GM10248 (cell line): ENCODE measurements at regions of chr13 and their contacts with region 1.

Region 1: GRCh38 chr13:27977476-27978300 is 8.6 kb upstream of the CDX2 start:
- DNase-seq: no peak
- CTCF ChIP-seq: no peak

Region 2: GRCh38 chr13:27374650-27375049 is 603.0 kb before region 1 on chr13:
- CTCF ChIA-PET with region 1: interaction called, 20 read pairs
- POLR2A ChIA-PET with region 1: no interaction called
- DNase-seq: peak; percentile 75
- CTCF ChIP-seq: peak; percentile 71

Region 3: DNA sequence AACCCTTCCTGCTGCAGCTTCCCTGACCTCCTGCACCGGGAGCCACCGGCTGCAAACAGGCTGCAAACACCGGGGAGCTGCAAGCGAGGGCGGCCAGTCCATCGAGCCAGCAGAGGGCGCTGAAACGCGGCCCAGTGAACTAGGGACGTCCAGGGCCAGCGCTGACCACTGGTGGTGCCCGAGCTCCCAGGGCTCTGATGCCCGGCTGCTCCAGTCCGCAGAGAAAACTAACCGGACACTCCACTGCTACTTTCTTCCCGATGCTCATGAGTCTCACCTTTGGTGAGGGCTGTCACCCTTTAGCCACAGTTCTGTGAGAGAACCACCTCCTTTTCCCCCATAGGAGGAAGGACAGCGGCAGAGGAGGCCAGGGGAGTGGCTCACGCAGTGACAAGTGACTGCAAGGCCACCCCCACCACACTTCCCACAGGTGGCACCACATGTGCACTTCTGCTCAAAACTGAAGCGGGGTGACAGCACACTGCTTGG is 444.5 kb before region 1 on chr13:
- CTCF ChIA-PET with region 1: interaction called, 13 read pairs
- POLR2A ChIA-PET with region 1: no interaction called
- DNase-seq: peak; percentile 67
- CTCF ChIP-seq: peak; percentile 98

Region 4: DNA sequence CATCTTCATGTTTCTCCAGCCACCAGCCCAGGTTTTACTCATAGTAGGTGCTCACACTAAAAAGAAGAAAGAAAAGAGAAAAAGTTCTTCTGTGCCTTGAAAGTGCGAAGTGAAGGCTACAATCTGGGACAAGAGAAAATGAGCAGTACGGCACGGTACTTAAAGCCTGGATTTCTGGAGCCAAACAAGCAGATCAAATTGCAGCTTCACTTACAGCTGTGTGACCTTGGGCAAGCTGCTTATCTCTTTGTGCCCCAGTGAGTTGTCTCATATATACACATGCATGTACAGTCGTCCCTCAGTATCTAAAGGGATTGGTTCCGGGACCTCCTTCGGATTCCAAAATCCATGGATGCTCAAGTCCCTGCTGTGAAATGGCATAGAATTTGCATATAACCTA is 143.6 kb before region 1 on chr13:
- CTCF ChIA-PET with region 1: interaction called, 404 read pairs
- POLR2A ChIA-PET with region 1: no interaction called
- DNase-seq: no peak
- CTCF ChIP-seq: no peak

Region 5: DNA sequence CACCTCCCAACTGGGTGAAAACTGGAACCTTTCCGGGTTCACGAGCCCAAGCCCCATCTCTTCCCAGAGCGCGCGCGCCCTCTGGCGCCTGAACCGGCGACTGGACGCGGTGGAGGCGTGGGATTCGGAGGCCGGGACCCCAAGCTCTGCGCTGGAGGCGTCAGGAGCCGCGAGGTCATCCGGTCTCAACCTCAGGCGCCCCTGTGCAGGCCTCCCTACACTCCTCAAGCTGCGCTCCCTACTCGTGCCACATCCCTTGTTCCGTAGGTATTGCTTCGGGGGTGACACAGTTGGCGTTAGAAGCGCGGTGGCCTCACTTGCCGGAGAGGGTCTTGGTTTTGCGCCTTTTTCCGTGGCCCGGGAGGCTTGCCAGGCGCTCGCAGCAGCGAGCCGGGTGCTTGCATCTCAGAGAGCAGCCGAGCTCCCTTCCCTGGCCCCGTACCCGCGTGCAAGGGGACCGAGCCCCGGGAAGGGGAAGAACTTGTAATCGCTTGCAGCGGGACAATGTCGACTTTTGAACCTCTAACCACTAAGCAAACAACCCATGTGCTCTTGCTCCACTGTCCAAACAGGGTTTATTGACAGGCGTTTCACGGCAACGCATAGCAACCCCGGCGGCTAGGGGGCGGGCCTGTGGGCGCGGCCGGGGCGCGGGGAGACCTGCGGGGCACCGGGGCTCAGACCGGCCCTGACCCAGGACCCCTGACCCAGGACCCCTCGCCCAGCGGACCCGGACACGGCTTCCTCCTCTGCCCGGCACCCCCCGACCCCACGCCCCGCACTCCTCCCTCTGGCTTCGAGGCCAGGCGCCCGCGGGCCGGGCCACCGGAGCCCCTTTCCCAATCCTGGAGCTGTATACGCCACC is 17.1 kb before region 1 on chr13:
- CTCF ChIA-PET with region 1: interaction called, 50 read pairs
- POLR2A ChIA-PET with region 1: no interaction called
- DNase-seq: peak; percentile 72
- CTCF ChIP-seq: peak; percentile 57